Activated CD4-positive, alpha-beta memory T cell treated with anti-CD3 and anti-CD28 coated beads for 36 hours (primary cell): ENCODE measurements at regions of chr6 and their contacts with region 1.

Region 1: GRCh38 chr6:137707590-137708360 is 159.3 kb upstream of the TNFAIP3 start:
- DNase-seq: peak; percentile 90
- H3K4me3 Mint-ChIP-seq: peak overlapping the region; percentile 67
- H3K27ac Mint-ChIP-seq: peak overlapping the region; percentile 88
- H3K4me1 Mint-ChIP-seq: peaks cover 75% of the 10 kb centered on the region
- H3K27me3 Mint-ChIP-seq: no peaks in the 10 kb centered on the region

Region 2: GRCh38 chr6:137432054-137432611 is 275.6 kb before region 1 on chr6:
- CTCF ChIA-PET with region 1: no interaction called
- POLR2A ChIA-PET with region 1: no interaction called
- intact Hi-C with region 1: no loop called
- DNase-seq: no peak
- H3K4me3 Mint-ChIP-seq: no peak overlapping the region
- H3K27ac Mint-ChIP-seq: no peak overlapping the region
- H3K4me1 Mint-ChIP-seq: no peaks in the 10 kb centered on the region
- H3K27me3 Mint-ChIP-seq: peaks cover 1% of the 10 kb centered on the region

Region 3: GRCh38 chr6:137697267-137697938 is 10.4 kb before region 1 on chr6:
- CTCF ChIA-PET with region 1: interaction called, 17 read pairs
- POLR2A ChIA-PET with region 1: interaction called, 4 read pairs
- intact Hi-C with region 1: no loop called
- DNase-seq: peak; percentile 52
- H3K4me3 Mint-ChIP-seq: no peak overlapping the region
- H3K27ac Mint-ChIP-seq: peak overlapping the region; percentile 43
- H3K4me1 Mint-ChIP-seq: peaks cover 57% of the 10 kb centered on the region
- H3K27me3 Mint-ChIP-seq: peaks cover 1% of the 10 kb centered on the region

Region 4: GRCh38 chr6:137811121-137811915 is 103.5 kb after region 1 on chr6:
- CTCF ChIA-PET with region 1: interaction called, 9 read pairs
- POLR2A ChIA-PET with region 1: interaction called, 4 read pairs
- intact Hi-C with region 1: loop called (anchors 1 kb)
- DNase-seq: peak; percentile 90
- H3K4me3 Mint-ChIP-seq: peak overlapping the region; percentile 36
- H3K27ac Mint-ChIP-seq: peak overlapping the region; percentile 91
- H3K4me1 Mint-ChIP-seq: peaks cover 66% of the 10 kb centered on the region
- H3K27me3 Mint-ChIP-seq: no peaks in the 10 kb centered on the region

Region 5: GRCh38 chr6:137866914-137867684 is 159.3 kb after region 1 on chr6 and contains the start of gene TNFAIP3:
- CTCF ChIA-PET with region 1: interaction called, 70 read pairs
- POLR2A ChIA-PET with region 1: interaction called, 43 read pairs
- intact Hi-C with region 1: loop called (anchors 1 kb)
- DNase-seq: peak; percentile 97
- H3K4me3 Mint-ChIP-seq: peak within 1 kb of the TSS; percentile 91
- H3K27ac Mint-ChIP-seq: peak within 1 kb of the TSS; percentile 93
- H3K4me1 Mint-ChIP-seq: peaks cover 32% of the 10 kb centered on the region
- H3K27me3 Mint-ChIP-seq: no peaks in the 10 kb centered on the region
- total RNA-seq, gene TNFAIP3: 259 to 267 TPM

Region 6: GRCh38 chr6:137903933-137904821 is 196.4 kb after region 1 on chr6:
- CTCF ChIA-PET with region 1: interaction called, 3 read pairs
- POLR2A ChIA-PET with region 1: no interaction called
- intact Hi-C with region 1: loop called (anchors 1 kb)
- DNase-seq: peak; percentile 75
- H3K4me3 Mint-ChIP-seq: peak overlapping the region; percentile 71
- H3K27ac Mint-ChIP-seq: peak overlapping the region; percentile 100
- H3K4me1 Mint-ChIP-seq: peaks cover 55% of the 10 kb centered on the region
- H3K27me3 Mint-ChIP-seq: no peaks in the 10 kb centered on the region

Region 7: GRCh38 chr6:137975188-137975940 is 267.6 kb after region 1 on chr6:
- CTCF ChIA-PET with region 1: interaction called, 13 read pairs
- POLR2A ChIA-PET with region 1: interaction called, 3 read pairs
- intact Hi-C with region 1: loop called (anchors 1 kb)
- DNase-seq: peak; percentile 38
- H3K4me3 Mint-ChIP-seq: peak overlapping the region; percentile 64
- H3K27ac Mint-ChIP-seq: peak overlapping the region; percentile 84
- H3K4me1 Mint-ChIP-seq: peaks cover 59% of the 10 kb centered on the region
- H3K27me3 Mint-ChIP-seq: no peaks in the 10 kb centered on the region

Region 8: DNA sequence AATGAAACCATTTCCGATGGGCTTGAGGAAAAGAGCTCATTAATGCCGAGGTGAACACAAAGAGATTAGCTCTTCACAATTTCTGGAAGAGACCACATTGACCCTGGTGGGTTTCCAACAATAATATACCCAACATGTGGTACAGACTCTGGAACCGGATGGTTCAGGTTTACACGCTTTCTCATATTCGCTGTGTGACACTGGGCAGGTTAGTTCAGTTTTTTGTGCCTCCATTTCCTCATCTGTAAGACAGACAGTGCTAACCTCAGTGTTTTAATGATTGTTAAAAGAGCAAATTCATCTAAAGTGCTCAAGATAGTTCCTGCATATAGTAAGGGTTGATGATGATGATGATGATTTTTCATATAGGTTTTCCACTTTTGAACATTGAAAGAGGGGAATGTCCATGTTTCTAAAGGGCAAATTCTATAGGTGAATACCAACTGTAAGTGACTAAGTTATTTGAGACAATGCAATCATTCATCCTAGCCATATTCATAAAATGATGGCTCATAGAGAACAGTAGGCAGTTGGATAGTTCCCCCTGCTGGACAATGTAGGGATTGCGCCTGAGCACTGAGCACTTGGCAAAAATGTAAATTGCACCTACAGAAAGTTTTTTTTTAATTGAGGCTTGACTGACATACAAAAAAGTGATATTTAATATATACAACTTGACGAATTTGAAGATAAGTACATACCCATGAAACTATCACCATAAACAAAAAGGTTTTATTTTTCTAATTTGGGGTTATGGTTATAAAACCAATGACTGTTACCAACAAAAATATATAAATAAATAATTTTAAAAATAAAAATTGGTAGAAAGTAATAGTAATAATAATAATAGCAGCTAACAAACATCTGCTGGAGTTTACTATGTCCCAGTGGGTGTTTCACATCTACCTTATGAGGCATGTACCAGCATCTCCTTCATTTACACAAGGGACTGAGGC is 401.5 kb after region 1 on chr6:
- CTCF ChIA-PET with region 1: interaction called, 9 read pairs
- POLR2A ChIA-PET with region 1: no interaction called
- intact Hi-C with region 1: loop called (anchors 1 kb)
- DNase-seq: peak; percentile 89
- H3K4me3 Mint-ChIP-seq: no peak overlapping the region
- H3K27ac Mint-ChIP-seq: no peak overlapping the region
- H3K4me1 Mint-ChIP-seq: peaks cover 21% of the 10 kb centered on the region
- H3K27me3 Mint-ChIP-seq: peaks cover 12% of the 10 kb centered on the region